K562 (cell line): ENCODE measurements at regions of chr3 and their contacts with region 1.

Region 1: DNA sequence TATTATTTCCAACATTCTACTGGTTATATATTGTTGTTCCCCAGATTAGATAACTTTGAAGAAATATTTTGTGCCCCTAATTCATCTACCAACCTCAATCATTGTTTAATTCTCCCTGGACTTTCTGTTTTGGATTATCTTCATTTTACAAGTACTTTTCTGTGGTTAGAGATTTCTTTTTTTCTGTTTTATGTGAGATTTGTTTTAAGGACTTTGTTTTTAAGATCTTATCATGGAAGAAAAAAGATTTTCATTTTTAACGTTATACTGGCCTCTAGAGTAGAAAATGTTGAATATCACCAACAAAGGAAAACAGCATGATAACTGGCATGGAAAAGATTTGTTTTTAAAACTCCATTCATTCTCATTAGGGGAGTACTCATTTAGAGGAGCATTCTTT is 210.9 kb upstream of the KCNMB2 start:
- DNase-seq: no peak
- ATAC-seq: 0 out of 3 replicates have a peak, but pooled peaks have one; percentile 39
- H3K4me3 ChIP-seq: no peak overlapping the region
- H3K27ac ChIP-seq: no peak overlapping the region
- H3K4me1 ChIP-seq: peaks cover 0 to 7% of the 10 kb centered on the region in 2 experiments; a peak in 2 of 5 replicates
- H3K27me3 ChIP-seq: no peaks in the 10 kb centered on the region
- CTCF ChIP-seq: peak in 2 of 3 experiments; percentile 24 to 58; a peak in 3 of 6 replicates
- EP300 ChIP-seq: no peak
- POLR2A ChIP-seq: no peak
- RAD21 ChIP-seq: peak; percentile 80 to 84

Region 2: DNA sequence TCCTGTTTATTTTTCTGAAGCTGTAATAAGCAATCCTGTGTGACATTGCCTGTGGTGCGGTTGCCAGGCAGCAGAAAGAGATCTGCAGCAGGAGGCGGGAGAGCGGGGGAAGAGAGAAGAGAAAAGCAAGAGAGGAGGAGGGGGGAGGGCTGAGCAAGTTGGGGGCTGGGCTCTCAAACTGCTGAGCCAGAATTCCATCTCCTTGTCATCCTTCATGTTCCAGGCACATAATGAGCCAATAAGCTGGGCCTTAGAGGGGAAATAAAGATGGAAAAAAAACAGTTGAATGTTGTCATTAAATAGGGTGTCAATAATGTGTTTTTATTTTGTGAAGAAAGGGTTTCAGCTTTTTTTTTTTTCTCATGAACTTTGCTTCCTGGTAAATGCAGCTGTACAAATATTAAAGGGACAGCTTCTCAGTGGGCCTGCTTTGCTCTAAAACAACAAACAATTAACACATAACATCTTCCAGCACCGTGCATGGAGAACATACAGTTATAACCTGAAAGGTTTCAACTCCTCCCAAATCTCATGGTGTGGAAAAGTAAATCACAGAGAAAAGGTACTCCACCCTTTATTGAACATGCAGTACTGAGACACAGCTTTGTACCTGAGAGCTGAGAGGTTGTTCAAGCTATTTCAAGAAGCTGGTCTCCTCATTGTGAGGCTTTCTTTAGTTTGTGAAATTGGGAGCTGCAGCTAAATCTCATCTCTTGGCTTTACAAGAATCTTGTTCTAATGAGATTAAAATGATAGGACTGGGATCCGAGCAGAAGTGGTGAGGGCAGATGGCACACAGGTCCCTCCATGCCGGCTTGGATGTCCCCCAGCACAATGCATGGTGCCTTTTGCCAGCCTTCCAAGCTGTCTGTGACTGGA is 240.2 kb before region 1 on chr3:
- CTCF ChIA-PET with region 1: no interaction called
- POLR2A ChIA-PET with region 1: no interaction called
- in situ Hi-C with region 1: no loop called
- intact Hi-C with region 1: loop called (anchors 10 kb)
- DNase-seq: peak in 1 of 4 experiments; percentile 15
- ATAC-seq: no peak
- H3K4me3 ChIP-seq: no peak overlapping the region
- H3K27ac ChIP-seq: no peak overlapping the region
- H3K4me1 ChIP-seq: no peaks in the 10 kb centered on the region; a peak in 1 of 5 replicates
- H3K27me3 ChIP-seq: no peaks in the 10 kb centered on the region
- CTCF ChIP-seq: no peak
- EP300 ChIP-seq: no peak
- POLR2A ChIP-seq: no peak
- RAD21 ChIP-seq: no peak